Activated naive CD4-positive, alpha-beta T cell treated with anti-CD3 and anti-CD28 coated beads for 36 hours (primary cell): ENCODE measurements at regions of chr4 and their contacts with region 1.

Region 1: DNA sequence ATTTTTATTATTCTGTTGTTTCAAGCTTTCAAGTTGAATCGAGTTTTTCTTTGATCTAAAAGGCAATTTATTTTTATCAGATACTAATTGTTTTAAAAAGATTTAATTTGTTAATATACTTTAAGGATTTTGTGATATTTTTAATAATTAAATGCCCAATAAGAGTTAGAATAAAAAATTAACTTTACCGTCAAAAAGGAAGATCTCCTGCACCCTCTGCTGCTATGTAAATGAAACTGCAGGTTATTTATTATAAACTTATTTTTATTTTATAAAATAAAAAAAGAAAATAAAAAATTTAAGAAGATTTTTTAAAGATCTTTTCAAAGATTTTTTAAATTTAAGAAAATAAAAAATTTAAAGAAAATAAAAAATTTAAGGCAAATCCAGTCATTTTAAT is 166.1 kb downstream of the CCSER1 start:
- DNase-seq: no peak
- H3K4me3 Mint-ChIP-seq: no peak overlapping the region
- H3K27ac Mint-ChIP-seq: no peak overlapping the region
- H3K4me1 Mint-ChIP-seq: no peaks in the 10 kb centered on the region
- H3K27me3 Mint-ChIP-seq: no peaks in the 10 kb centered on the region

Region 2: GRCh38 chr4:89158884-89159503 is 1134.3 kb before region 1 on chr4:
- CTCF ChIA-PET with region 1: no interaction called
- intact Hi-C with region 1: loop called (anchors 2 kb)
- DNase-seq: no peak
- H3K4me3 Mint-ChIP-seq: no peak overlapping the region
- H3K27ac Mint-ChIP-seq: no peak overlapping the region
- H3K4me1 Mint-ChIP-seq: no peaks in the 10 kb centered on the region
- H3K27me3 Mint-ChIP-seq: peaks cover 4% of the 10 kb centered on the region

Region 3: DNA sequence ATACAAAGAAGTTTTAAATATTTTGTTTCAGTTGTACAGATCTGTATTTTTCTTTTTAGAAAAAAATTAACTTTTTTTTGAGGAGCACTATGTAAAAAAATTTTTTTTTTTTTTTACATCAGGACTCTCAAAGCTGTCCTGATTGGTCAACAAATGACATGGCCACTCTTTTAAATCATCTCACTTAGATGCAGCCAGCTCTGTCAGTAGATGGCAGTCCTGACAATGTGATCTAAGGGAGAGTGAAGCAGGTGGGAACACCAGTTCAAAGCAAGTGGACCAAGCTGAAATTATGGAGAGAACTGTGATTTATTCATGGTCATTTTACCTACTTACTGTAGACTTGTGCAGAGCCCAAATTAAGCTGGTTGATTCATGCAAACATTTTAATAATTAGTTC is 811.1 kb before region 1 on chr4:
- CTCF ChIA-PET with region 1: no interaction called
- intact Hi-C with region 1: loop called (anchors 10 kb)
- DNase-seq: peak; percentile 28
- H3K4me3 Mint-ChIP-seq: no peak overlapping the region
- H3K27ac Mint-ChIP-seq: no peak overlapping the region
- H3K4me1 Mint-ChIP-seq: peaks cover 4% of the 10 kb centered on the region
- H3K27me3 Mint-ChIP-seq: no peaks in the 10 kb centered on the region

Region 4: DNA sequence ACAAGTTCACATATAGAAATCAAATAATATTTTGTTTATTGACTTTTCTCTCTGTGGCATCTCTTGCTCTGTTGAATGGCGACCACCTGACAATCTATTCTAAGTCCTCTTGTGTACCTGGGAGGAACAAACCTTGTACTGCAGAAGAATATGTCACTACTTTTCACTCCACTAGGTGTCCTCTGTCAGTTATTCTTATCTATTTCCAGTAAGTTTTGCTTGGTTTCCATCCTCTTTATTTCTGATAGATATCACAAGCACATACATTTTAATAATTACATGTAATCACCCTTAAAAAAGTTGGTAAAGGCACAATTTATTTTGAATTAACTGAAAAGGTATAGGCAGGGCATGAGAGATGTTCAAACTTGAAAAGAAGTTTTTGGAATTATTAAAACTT is 694.7 kb before region 1 on chr4:
- CTCF ChIA-PET with region 1: no interaction called
- intact Hi-C with region 1: loop called (anchors 5 kb)
- DNase-seq: no peak
- H3K4me3 Mint-ChIP-seq: no peak overlapping the region
- H3K27ac Mint-ChIP-seq: no peak overlapping the region
- H3K4me1 Mint-ChIP-seq: no peaks in the 10 kb centered on the region
- H3K27me3 Mint-ChIP-seq: peaks cover 5% of the 10 kb centered on the region

Region 5: DNA sequence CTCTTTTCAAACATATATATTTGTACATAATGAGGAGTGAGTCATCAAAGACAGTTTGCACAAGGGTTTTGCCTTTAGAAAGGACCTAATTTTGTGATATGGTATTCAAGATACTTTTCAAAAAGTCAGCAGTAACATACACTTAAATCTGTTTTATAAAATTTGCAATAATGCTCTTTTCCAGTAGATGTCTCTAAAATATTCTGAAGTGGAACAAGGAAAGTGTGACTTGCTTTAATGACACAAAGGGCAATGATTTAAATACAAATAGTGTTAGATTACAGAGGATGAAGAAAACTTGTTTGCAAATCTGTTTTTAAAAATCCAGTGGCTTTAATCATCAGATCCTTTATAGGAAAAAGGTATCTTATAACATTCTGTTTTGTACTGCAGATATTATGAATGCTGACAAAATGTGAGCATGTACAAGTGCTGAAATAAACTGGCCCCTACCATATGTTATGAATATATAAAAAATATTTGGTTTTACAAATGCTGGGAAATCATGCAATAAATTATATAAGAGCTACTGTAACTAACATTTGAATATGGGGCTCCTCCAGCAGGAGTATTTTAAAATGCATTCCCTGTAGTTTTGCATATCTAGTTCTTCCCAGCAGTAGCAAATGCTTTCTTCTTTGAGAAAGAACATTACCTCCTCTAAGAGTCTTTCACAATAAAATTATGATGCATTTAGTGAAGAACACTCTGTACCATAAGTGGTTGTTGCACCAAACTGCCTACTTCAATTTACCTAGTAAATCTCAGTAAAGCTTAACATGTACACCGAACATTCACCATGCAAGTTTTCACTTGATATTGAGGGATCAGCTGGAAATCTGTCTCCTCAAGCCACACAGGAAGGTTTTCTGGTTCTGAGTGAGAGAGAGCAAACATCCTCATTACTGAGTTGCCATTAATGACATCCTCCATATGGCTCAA is 378.4 kb before region 1 on chr4:
- CTCF ChIA-PET with region 1: no interaction called
- intact Hi-C with region 1: loop called (anchors 1 kb)
- DNase-seq: no peak
- H3K4me3 Mint-ChIP-seq: no peak overlapping the region
- H3K27ac Mint-ChIP-seq: no peak overlapping the region
- H3K4me1 Mint-ChIP-seq: no peaks in the 10 kb centered on the region
- H3K27me3 Mint-ChIP-seq: no peaks in the 10 kb centered on the region

Region 6: DNA sequence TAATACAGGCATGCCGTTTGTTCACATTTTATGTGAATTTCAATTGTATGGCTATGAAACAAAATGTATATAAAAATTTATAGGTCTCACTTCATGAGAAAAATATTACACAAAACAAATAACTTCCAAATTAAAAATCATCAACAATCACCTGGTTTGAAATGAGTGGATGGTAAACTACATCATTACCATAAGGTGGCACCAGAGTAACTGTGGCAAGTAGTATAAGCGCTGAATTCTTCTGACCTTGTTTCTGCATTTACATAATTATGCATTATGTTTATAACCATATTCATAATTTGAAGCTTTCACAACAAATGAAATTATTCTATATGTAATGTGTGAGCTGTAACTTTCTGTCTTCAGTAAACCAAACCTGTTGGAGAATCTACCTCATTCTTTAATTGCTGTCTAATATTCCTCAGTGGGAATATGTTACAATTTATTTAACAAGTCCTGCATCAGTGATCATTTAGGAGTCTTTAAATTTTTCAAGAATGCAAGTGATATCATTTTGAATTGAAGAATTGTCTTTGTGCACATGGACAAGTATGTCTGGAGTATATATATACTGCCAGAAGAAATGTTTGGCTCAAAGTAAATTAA is 343.4 kb before region 1 on chr4:
- CTCF ChIA-PET with region 1: no interaction called
- intact Hi-C with region 1: loop called (anchors 1 kb)
- DNase-seq: no peak
- H3K4me3 Mint-ChIP-seq: no peak overlapping the region
- H3K27ac Mint-ChIP-seq: no peak overlapping the region
- H3K4me1 Mint-ChIP-seq: no peaks in the 10 kb centered on the region
- H3K27me3 Mint-ChIP-seq: no peaks in the 10 kb centered on the region

Region 7: GRCh38 chr4:90546114-90546513 is 252.8 kb after region 1 on chr4:
- CTCF ChIA-PET with region 1: no interaction called
- intact Hi-C with region 1: no loop called
- DNase-seq: no peak
- H3K4me3 Mint-ChIP-seq: no peak overlapping the region
- H3K27ac Mint-ChIP-seq: no peak overlapping the region
- H3K4me1 Mint-ChIP-seq: peaks cover 2% of the 10 kb centered on the region
- H3K27me3 Mint-ChIP-seq: no peaks in the 10 kb centered on the region